Caco-2 (cell line): ENCODE measurements at regions of chr13 and their contacts with region 1.

Region 1: DNA sequence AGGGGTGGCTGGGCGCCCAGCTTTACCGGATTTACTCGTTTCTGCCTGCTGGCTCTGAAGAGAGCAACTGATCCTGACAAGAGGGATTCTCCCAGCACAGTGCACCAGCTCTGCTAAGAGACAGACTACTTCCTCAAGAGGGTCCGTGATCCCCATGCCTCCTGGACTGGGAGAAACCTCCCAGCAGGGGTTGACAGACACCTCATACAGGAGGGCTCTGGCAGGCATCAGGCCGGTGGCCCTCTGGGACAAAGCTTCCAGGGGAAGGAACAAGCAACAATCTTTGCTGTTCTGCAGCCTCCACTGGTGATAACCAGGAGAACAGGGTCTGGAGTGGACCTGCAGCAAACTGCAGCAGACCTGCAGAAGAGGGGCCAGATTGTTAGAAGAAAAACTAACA is 1192.5 kb upstream of the PRR20A start:
- DNase-seq: no peak
- H3K4me3 ChIP-seq: no peak overlapping the region
- H3K4me3 Mint-ChIP-seq: no peak overlapping the region
- H3K27ac Mint-ChIP-seq: no peak overlapping the region
- H3K4me1 ChIP-seq: no peaks in the 10 kb centered on the region
- H3K4me1 Mint-ChIP-seq: no peaks in the 10 kb centered on the region
- H3K27me3 ChIP-seq: no peaks in the 10 kb centered on the region
- H3K27me3 Mint-ChIP-seq: peaks cover 5% of the 10 kb centered on the region
- CTCF ChIP-seq: no peak

Region 2: DNA sequence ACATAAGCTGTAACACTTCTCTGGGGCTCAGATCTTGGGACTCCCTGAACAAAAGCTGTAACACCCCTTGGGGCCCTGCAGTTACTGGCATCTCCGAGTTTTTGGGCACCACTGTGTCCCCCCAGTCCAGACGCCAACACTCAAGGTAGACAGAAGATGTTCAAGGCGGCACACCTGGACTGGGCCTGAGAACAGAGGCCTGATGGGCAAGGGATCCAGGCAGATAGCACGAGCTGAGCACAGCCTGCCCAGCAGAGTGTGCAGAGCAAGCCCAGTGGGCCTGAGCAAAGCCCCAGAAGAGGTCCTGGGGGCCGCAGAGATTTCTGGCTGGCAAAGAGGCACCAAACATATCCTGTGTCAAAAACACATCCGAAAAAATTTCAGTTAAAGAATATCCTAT is 29.3 kb after region 1 on chr13:
- CTCF ChIA-PET with region 1: no interaction called
- POLR2A ChIA-PET with region 1: interaction called, 20 read pairs
- intact Hi-C with region 1: no loop called
- DNase-seq: no peak
- H3K4me3 ChIP-seq: no peak overlapping the region
- H3K4me3 Mint-ChIP-seq: no peak overlapping the region
- H3K27ac Mint-ChIP-seq: no peak overlapping the region
- H3K4me1 ChIP-seq: no peaks in the 10 kb centered on the region
- H3K4me1 Mint-ChIP-seq: no peaks in the 10 kb centered on the region
- H3K27me3 ChIP-seq: no peaks in the 10 kb centered on the region
- H3K27me3 Mint-ChIP-seq: no peaks in the 10 kb centered on the region
- CTCF ChIP-seq: no peak